Heart right ventricle (tissue), 16 donors: ENCODE measurements at regions of chr12 and their contacts with region 1.

Region 1: DNA sequence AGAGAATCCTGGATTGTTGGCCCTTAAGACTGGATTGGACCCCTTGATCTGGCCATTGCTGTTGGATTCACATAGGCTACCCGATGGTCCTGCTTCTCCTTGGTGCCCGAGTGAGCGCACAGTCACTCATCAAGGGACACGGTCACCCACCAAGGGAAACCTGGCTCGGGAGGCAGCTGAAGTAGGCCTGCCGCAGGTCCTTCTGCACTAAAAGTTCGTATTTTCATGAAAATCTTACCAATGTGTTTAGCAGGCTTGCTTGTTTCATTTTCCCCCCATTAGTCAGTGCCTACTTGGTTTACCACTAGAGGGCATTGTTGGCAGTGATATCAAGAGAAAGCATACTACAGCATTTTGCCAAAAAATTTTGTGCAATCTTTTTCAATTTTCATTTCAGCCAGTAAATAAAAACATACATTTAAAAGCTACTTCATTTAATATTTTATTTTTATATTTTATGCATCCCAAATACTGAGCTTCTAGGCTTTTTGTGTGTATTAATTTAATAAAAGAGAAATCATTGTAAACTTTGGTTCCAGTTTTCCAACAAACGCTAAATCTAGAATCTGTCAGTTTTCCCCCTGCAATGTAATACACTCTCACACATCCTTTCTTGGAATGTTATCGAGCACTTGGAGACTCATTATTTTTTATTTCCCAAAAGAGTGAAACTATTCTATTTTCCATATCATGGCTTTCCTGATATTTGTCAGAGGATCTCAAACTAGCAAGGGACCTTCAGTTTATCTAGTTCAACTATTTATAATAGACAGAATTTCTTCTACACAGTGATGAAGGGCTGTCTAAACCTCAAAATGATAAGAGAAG is 116.7 kb downstream of the LMNTD1 start:
- DNase-seq: peak in 1 of 2 donors; percentile 40
- ATAC-seq: peak in 6 of 8 donors; percentile 52 to 74 (median 56)
- H3K4me3 ChIP-seq: peak overlapping the region in 6 of 10 donors; percentile 19 to 50 (median 40)
- H3K27ac ChIP-seq: no peak overlapping the region
- H3K4me1 ChIP-seq: peaks cover 0 to 5% (median 0%) of the 10 kb centered on the region in 9 donors
- H3K27me3 ChIP-seq: no peaks in the 10 kb centered on the region
- CTCF ChIP-seq: peak; percentile 56 to 92 (median 83)

Region 2: DNA sequence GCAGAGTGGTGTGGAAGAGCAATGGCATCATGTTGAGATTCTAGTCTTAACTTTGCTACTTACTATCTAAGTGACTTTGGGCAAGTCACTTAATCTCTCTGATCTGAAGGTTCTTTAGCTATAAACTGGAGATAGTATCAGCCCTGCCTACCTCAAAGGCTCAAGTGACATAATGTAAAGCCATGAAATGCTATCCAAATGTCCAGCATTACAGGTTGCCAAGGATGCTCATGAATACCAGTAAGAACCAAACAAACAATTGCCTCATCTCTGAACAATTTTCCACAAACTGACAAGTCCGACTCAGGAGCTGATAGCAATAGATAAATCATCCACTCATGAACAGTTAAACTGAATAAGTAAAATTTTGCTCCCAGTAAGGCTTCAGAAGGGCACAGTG is 65.1 kb after region 1 on chr12:
- intact Hi-C with region 1: no loop called
- DNase-seq: no peak
- ATAC-seq: no peak
- H3K4me3 ChIP-seq: no peak overlapping the region
- H3K27ac ChIP-seq: no peak overlapping the region
- H3K4me1 ChIP-seq: no peaks in the 10 kb centered on the region
- H3K27me3 ChIP-seq: peaks cover 0 to 4% (median 0%) of the 10 kb centered on the region in 7 donors
- CTCF ChIP-seq: no peak

Region 3: GRCh38 chr12:26017484-26018206 is 581.2 kb after region 1 on chr12:
- intact Hi-C with region 1: loop called in 2 of 10 experiments (anchors 5 to 10 kb)
- DNase-seq: peak in 1 of 2 donors; percentile 12
- ATAC-seq: peak in 6 of 8 donors; percentile 28 to 77 (median 44)
- H3K4me3 ChIP-seq: peak overlapping the region in 1 of 10 donors; percentile 10
- H3K27ac ChIP-seq: no peak overlapping the region
- H3K4me1 ChIP-seq: peaks cover 0 to 50% (median 18%) of the 10 kb centered on the region in 9 donors
- H3K27me3 ChIP-seq: no peaks in the 10 kb centered on the region
- CTCF ChIP-seq: peak; percentile 30 to 75 (median 61)

Region 4: GRCh38 chr12:26028953-26029735 is 592.7 kb after region 1 on chr12:
- intact Hi-C with region 1: loop called (anchors 2 to 10 kb)
- DNase-seq: peak in 1 of 2 donors; percentile 32
- ATAC-seq: peak in 7 of 8 donors; percentile 56 to 76 (median 68)
- H3K4me3 ChIP-seq: no peak overlapping the region
- H3K27ac ChIP-seq: peak overlapping the region in 2 of 10 donors; percentile 9 to 10
- H3K4me1 ChIP-seq: peaks cover 0 to 38% (median 14%) of the 10 kb centered on the region in 9 donors
- H3K27me3 ChIP-seq: no peaks in the 10 kb centered on the region
- CTCF ChIP-seq: peak; percentile 68 to 94 (median 85)

Region 5: GRCh38 chr12:26091822-26092221 is 655.4 kb after region 1 on chr12:
- intact Hi-C with region 1: loop called in 1 of 10 experiments (anchors 5 kb)
- DNase-seq: no peak
- ATAC-seq: peak in 1 of 8 donors; percentile 44
- H3K4me3 ChIP-seq: no peak overlapping the region
- H3K27ac ChIP-seq: no peak overlapping the region
- H3K4me1 ChIP-seq: no peaks in the 10 kb centered on the region
- H3K27me3 ChIP-seq: no peaks in the 10 kb centered on the region
- CTCF ChIP-seq: peak in 4 of 9 donors; percentile 18 to 42 (median 30)

Region 6: DNA sequence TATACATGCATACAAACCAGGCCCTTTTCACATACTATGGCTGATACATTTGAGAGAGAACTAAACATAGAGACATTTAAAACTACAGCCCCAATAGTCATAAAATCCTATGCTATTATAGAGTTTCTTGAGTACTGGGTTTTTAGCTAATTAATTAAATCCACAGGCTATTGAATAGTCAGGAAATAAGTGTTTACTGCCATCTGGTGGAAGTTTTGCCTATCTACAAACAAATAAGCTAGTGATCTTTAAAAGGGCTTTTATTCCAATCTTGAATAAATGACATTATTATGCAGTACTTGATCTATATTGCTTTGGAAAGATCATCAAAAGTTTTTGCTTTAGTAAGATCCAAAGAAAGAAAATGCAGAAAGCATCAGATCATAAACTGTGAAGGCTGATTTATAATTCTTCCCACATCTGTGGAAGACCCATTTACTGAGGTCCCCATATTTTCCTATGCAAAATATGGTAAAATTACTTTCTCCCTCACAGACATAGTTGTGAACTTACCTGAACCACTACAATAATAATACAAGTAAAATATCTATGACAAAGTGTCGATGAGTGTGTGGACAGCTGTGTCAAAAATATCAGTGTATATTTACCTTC is 1265.3 kb after region 1 on chr12:
- intact Hi-C with region 1: loop called in 1 of 10 experiments (anchors 10 kb)
- DNase-seq: no peak
- ATAC-seq: no peak
- H3K4me3 ChIP-seq: no peak overlapping the region
- H3K27ac ChIP-seq: no peak overlapping the region
- H3K4me1 ChIP-seq: peaks cover 0 to 24% (median 18%) of the 10 kb centered on the region in 9 donors
- H3K27me3 ChIP-seq: no peaks in the 10 kb centered on the region
- CTCF ChIP-seq: peak; percentile 35 to 80 (median 66)